CD8-positive, alpha-beta T cell (primary cell): ENCODE measurements at regions of chr3 and their contacts with region 1.

Region 1: GRCh38 chr3:120742198-120742849 is at the starts of genes GTF2E1 and RABL3:
- DNase-seq: peak; percentile 93 to 99 (median 97)
- ATAC-seq: peak; percentile 96
- H3K4me3 ChIP-seq: peak within 1 kb of the TSS; percentile 89 to 90
- H3K4me3 Mint-ChIP-seq: peak within 1 kb of the TSS; percentile 94
- H3K27ac ChIP-seq: peak within 1 kb of the TSS; percentile 97 to 98
- H3K27ac Mint-ChIP-seq: peak within 1 kb of the TSS; percentile 98
- H3K4me1 ChIP-seq: peaks cover 16% of the 10 kb centered on the region
- H3K4me1 Mint-ChIP-seq: peaks cover 49% of the 10 kb centered on the region
- H3K27me3 ChIP-seq: no peaks in the 10 kb centered on the region
- H3K27me3 Mint-ChIP-seq: no peaks in the 10 kb centered on the region
- CTCF ChIP-seq: no peak
- total RNA-seq, gene GTF2E1: 5.8 to 7.8 TPM
- total RNA-seq, gene RABL3: 14.0 to 15.2 TPM

Region 2: GRCh38 chr3:119437691-119438258 is 1304.5 kb before region 1 on chr3:
- CTCF ChIA-PET with region 1: no interaction called
- POLR2A ChIA-PET with region 1: no interaction called
- intact Hi-C with region 1: no loop called
- DNase-seq: peak in 3 of 9 experiments; percentile 19 to 57 (median 32)
- ATAC-seq: peak; percentile 54
- H3K4me3 ChIP-seq: no peak overlapping the region
- H3K4me3 Mint-ChIP-seq: no peak overlapping the region
- H3K27ac ChIP-seq: peak overlapping the region in 1 of 2 experiments; percentile 17
- H3K27ac Mint-ChIP-seq: peak overlapping the region; percentile 23
- H3K4me1 ChIP-seq: no peaks in the 10 kb centered on the region
- H3K4me1 Mint-ChIP-seq: peaks cover 10% of the 10 kb centered on the region
- H3K27me3 ChIP-seq: no peaks in the 10 kb centered on the region
- H3K27me3 Mint-ChIP-seq: no peaks in the 10 kb centered on the region
- CTCF ChIP-seq: no peak

Region 3: GRCh38 chr3:119463171-119464169 is 1278.9 kb before region 1 on chr3 and contains the start of gene TMEM39A:
- CTCF ChIA-PET with region 1: no interaction called
- POLR2A ChIA-PET with region 1: no interaction called
- intact Hi-C with region 1: loop called (anchors 1 to 10 kb)
- DNase-seq: peak; percentile 98 to 100 (median 99)
- ATAC-seq: peak; percentile 86
- H3K4me3 ChIP-seq: peak within 1 kb of the TSS; percentile 93 to 94
- H3K4me3 Mint-ChIP-seq: peak within 1 kb of the TSS; percentile 93
- H3K27ac ChIP-seq: peak within 1 kb of the TSS; percentile 85 to 97
- H3K27ac Mint-ChIP-seq: peak within 1 kb of the TSS; percentile 96
- H3K4me1 ChIP-seq: peaks cover 19% of the 10 kb centered on the region
- H3K4me1 Mint-ChIP-seq: peaks cover 44% of the 10 kb centered on the region
- H3K27me3 ChIP-seq: no peaks in the 10 kb centered on the region
- H3K27me3 Mint-ChIP-seq: no peaks in the 10 kb centered on the region
- CTCF ChIP-seq: no peak
- total RNA-seq, gene TMEM39A: 67.8 to 68.0 TPM

Region 4: GRCh38 chr3:120596116-120596852 is 146.0 kb before region 1 on chr3 and contains the start of gene NDUFB4:
- CTCF ChIA-PET with region 1: interaction called, 11 read pairs
- POLR2A ChIA-PET with region 1: interaction called, 18 read pairs
- intact Hi-C with region 1: loop called (anchors 1 to 2 kb)
- DNase-seq: peak; percentile 87 to 99 (median 95)
- ATAC-seq: peak; percentile 92
- H3K4me3 ChIP-seq: peak within 1 kb of the TSS; percentile 77 to 92
- H3K4me3 Mint-ChIP-seq: peak within 1 kb of the TSS; percentile 94
- H3K27ac ChIP-seq: peak within 1 kb of the TSS; percentile 91 to 95
- H3K27ac Mint-ChIP-seq: peak within 1 kb of the TSS; percentile 97
- H3K4me1 ChIP-seq: peaks cover 34% of the 10 kb centered on the region
- H3K4me1 Mint-ChIP-seq: peaks cover 12% of the 10 kb centered on the region
- H3K27me3 ChIP-seq: no peaks in the 10 kb centered on the region
- H3K27me3 Mint-ChIP-seq: no peaks in the 10 kb centered on the region
- CTCF ChIP-seq: no peak
- total RNA-seq, gene NDUFB4: 63.2 to 71.5 TPM

Region 5: GRCh38 chr3:120726784-120727183 is 15.5 kb before region 1 on chr3:
- CTCF ChIA-PET with region 1: interaction called, 4 read pairs
- POLR2A ChIA-PET with region 1: interaction called, 25 read pairs
- intact Hi-C with region 1: no loop called
- DNase-seq: no peak
- ATAC-seq: no peak
- H3K4me3 ChIP-seq: no peak overlapping the region
- H3K4me3 Mint-ChIP-seq: no peak overlapping the region
- H3K27ac ChIP-seq: no peak overlapping the region
- H3K27ac Mint-ChIP-seq: no peak overlapping the region
- H3K4me1 ChIP-seq: no peaks in the 10 kb centered on the region
- H3K4me1 Mint-ChIP-seq: peaks cover 9% of the 10 kb centered on the region
- H3K27me3 ChIP-seq: no peaks in the 10 kb centered on the region
- H3K27me3 Mint-ChIP-seq: no peaks in the 10 kb centered on the region
- CTCF ChIP-seq: no peak